GM12878 (cell line): ENCODE measurements at regions of chr10 and their contacts with region 1.

Region 1: GRCh38 chr10:119517235-119518141 is 25.0 kb downstream of the RGS10 start:
- DNase-seq: peak; percentile 59
- ATAC-seq: peak; percentile 77
- H3K4me3 ChIP-seq: peak overlapping the region; percentile 39; the same call in 1 of the 2 replicates
- H3K27ac ChIP-seq: peak overlapping the region; percentile 100
- H3K4me1 ChIP-seq: peaks cover 43% of the 10 kb centered on the region
- H3K27me3 ChIP-seq: no peaks in the 10 kb centered on the region
- CTCF ChIP-seq: no peak
- EP300 ChIP-seq: 0 out of 4 replicates have a peak, but pooled peaks of 1 of the 2 experiments have one; percentile 5
- POLR2A ChIP-seq: no peak; the same call in none of the 2 replicates
- RAD21 ChIP-seq: no peak

Region 2: DNA sequence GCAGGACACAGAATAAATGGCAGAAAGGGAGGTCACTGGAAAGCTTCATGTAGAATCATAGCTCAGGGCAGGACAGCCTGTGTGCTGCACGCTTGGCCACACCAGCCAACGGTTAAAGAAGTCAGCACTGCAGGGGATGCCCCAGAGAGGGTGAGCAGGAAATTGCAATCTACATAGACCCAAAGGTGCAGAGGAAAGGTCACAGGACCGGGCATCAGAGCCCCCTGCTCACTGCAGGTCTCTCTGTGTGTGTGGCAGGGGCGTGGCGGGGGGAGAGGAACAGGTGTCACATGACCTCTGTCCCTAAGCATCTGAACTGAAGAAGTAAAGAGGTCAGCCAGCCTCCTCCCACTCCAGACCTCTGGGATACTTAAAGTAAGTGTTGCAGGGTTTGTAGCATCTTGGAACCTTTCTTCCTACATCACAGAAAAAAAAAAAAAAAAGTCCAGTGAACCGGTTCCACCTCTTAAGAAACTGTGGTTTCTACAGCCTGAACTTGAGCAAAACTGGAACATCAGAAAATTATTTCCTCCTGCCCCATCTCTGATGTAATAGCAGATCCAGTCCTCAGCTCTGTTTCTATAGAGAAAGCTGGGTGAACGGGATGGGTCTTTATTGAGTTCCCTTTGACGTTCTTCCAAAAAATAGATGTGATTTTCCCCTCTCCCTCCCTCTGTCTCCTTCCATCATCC is 39.2 kb before region 1 on chr10:
- CTCF ChIA-PET with region 1: no interaction called
- POLR2A ChIA-PET with region 1: interaction called, 3 read pairs
- RAD21 ChIA-PET with region 1: interaction called, 4 read pairs
- SMC1A ChIA-PET with region 1: interaction called, 12 read pairs
- in situ Hi-C with region 1: no loop called
- intact Hi-C with region 1: no loop called
- DNase-seq: peak; percentile 46
- ATAC-seq: peak; percentile 98
- H3K4me3 ChIP-seq: peak overlapping the region; percentile 35; the same call in 1 of the 2 replicates
- H3K27ac ChIP-seq: peak overlapping the region; percentile 30; the same call in 1 of the 2 replicates
- H3K4me1 ChIP-seq: peaks cover 25% of the 10 kb centered on the region
- H3K27me3 ChIP-seq: no peaks in the 10 kb centered on the region
- CTCF ChIP-seq: no peak
- EP300 ChIP-seq: peak in 1 of 2 experiments; percentile 27; a peak in 1 of 4 replicates
- POLR2A ChIP-seq: no peak
- RAD21 ChIP-seq: no peak

Region 3: GRCh38 chr10:119488675-119489074 is 28.8 kb before region 1 on chr10:
- CTCF ChIA-PET with region 1: interaction called, 6 read pairs
- POLR2A ChIA-PET with region 1: interaction called, 10 read pairs
- RAD21 ChIA-PET with region 1: interaction called, 7 read pairs
- SMC1A ChIA-PET with region 1: interaction called, 8 read pairs
- in situ Hi-C with region 1: no loop called
- intact Hi-C with region 1: no loop called
- DNase-seq: no peak
- ATAC-seq: no peak
- H3K4me3 ChIP-seq: no peak overlapping the region
- H3K27ac ChIP-seq: no peak overlapping the region
- H3K4me1 ChIP-seq: peaks cover 8% of the 10 kb centered on the region
- H3K27me3 ChIP-seq: no peaks in the 10 kb centered on the region
- CTCF ChIP-seq: no peak
- EP300 ChIP-seq: no peak
- POLR2A ChIP-seq: no peak
- RAD21 ChIP-seq: no peak

Region 4: GRCh38 chr10:119502209-119502608 is 15.3 kb before region 1 on chr10:
- CTCF ChIA-PET with region 1: interaction called, 4 read pairs
- POLR2A ChIA-PET with region 1: interaction called, 4 read pairs
- RAD21 ChIA-PET with region 1: interaction called, 6 read pairs
- SMC1A ChIA-PET with region 1: interaction called, 19 read pairs
- in situ Hi-C with region 1: no loop called
- intact Hi-C with region 1: no loop called
- DNase-seq: no peak
- ATAC-seq: peak; percentile 77
- H3K4me3 ChIP-seq: no peak overlapping the region
- H3K27ac ChIP-seq: peak overlapping the region; percentile 55
- H3K4me1 ChIP-seq: peaks cover 19% of the 10 kb centered on the region
- H3K27me3 ChIP-seq: no peaks in the 10 kb centered on the region
- CTCF ChIP-seq: no peak
- EP300 ChIP-seq: no peak
- POLR2A ChIP-seq: no peak
- RAD21 ChIP-seq: no peak

Region 5: GRCh38 chr10:119567978-119568377 is 50.5 kb after region 1 on chr10:
- CTCF ChIA-PET with region 1: no interaction called
- POLR2A ChIA-PET with region 1: no interaction called
- RAD21 ChIA-PET with region 1: no interaction called
- SMC1A ChIA-PET with region 1: no interaction called
- in situ Hi-C with region 1: no loop called
- intact Hi-C with region 1: no loop called
- DNase-seq: no peak
- ATAC-seq: peak; percentile 73
- H3K4me3 ChIP-seq: no peak overlapping the region
- H3K27ac ChIP-seq: no peak overlapping the region
- H3K4me1 ChIP-seq: peaks cover 7% of the 10 kb centered on the region
- H3K27me3 ChIP-seq: no peaks in the 10 kb centered on the region
- CTCF ChIP-seq: no peak
- EP300 ChIP-seq: no peak
- POLR2A ChIP-seq: no peak
- RAD21 ChIP-seq: no peak